ENCODE measurements at regions of chr1 and their contacts with region 1.

Region 1: GRCh38 chr1:16960560-16961296 is 19.7 kb downstream of the MFAP2 start:
- DNase-seq: peak; percentile 89
- ATAC-seq: peak; percentile 94
- H3K4me3 Mint-ChIP-seq: peak overlapping the region; percentile 63
- H3K27ac Mint-ChIP-seq: no peak overlapping the region
- H3K4me1 Mint-ChIP-seq: peaks cover 11% of the 10 kb centered on the region
- H3K27me3 Mint-ChIP-seq: no peaks in the 10 kb centered on the region
- CTCF ChIP-seq: peak; percentile 75

Region 2: GRCh38 chr1:16946646-16947045 is 14.1 kb before region 1 on chr1:
- CTCF ChIA-PET with region 1: interaction called, 31 read pairs
- POLR2A ChIA-PET with region 1: no interaction called
- intact Hi-C with region 1: no loop called
- DNase-seq: no peak
- ATAC-seq: no peak
- H3K4me3 Mint-ChIP-seq: no peak overlapping the region
- H3K27ac Mint-ChIP-seq: no peak overlapping the region
- H3K4me1 Mint-ChIP-seq: no peaks in the 10 kb centered on the region
- H3K27me3 Mint-ChIP-seq: no peaks in the 10 kb centered on the region
- CTCF ChIP-seq: no peak

Region 3: DNA sequence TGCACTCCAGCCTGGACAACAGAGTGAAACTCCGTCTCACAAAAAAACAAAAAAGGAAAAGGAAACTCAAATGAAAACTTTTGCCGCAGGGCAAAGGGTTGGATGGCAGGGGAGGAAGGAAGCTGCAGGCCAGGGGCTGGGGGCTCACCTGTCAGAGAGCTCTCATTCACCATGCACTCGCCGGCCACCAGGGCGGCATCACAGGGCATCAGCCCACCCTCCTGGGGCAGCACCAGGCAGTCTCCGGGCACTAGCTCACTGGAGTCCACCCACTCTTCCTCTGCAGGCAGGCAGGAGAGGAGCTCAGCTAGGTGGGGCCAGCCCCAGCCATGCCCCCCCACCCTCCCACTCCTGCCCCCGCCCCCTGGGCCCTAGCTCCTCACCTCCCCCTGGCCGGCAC is 39.1 kb after region 1 on chr1:
- CTCF ChIA-PET with region 1: interaction called, 10 read pairs
- POLR2A ChIA-PET with region 1: no interaction called
- intact Hi-C with region 1: no loop called
- DNase-seq: no peak
- ATAC-seq: no peak
- H3K4me3 Mint-ChIP-seq: no peak overlapping the region
- H3K27ac Mint-ChIP-seq: no peak overlapping the region
- H3K4me1 Mint-ChIP-seq: no peaks in the 10 kb centered on the region
- H3K27me3 Mint-ChIP-seq: no peaks in the 10 kb centered on the region
- CTCF ChIP-seq: no peak

Region 4: DNA sequence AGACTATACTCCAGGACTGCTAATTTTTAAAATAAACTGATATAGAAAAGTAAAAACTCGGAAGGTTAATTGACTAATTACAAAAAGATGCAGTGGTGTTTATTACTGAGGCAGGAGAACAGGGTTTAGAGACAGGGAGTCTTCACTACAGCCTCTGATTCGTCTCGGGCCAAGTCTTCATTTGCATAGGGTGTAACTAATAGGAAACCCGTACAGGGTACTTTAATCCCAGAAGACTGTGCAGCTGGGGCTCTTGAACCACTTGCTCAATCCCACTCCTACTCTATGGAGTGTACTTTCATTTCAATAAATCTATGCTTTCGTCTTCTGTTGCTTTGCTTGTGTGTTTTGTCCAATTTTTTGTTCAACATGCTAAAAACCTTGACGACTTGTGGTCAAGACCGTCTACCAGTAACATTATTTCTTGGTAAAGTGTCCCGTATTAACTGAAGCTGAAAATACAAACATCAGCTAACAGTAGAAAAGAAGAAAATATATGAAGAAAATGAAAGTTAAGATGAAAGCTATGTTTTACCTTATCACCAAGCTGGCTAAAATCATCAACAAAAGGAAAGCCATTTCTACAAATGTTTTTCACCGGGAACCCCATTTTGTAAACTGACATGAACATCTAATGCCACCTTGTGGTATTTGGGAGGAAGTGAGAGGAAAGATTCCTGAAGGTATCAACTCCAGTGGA is 85.1 kb after region 1 on chr1:
- CTCF ChIA-PET with region 1: interaction called, 12 read pairs
- POLR2A ChIA-PET with region 1: interaction called, 3 read pairs
- intact Hi-C with region 1: no loop called
- DNase-seq: no peak
- ATAC-seq: no peak
- H3K4me3 Mint-ChIP-seq: no peak overlapping the region
- H3K27ac Mint-ChIP-seq: peak overlapping the region; percentile 68
- H3K4me1 Mint-ChIP-seq: peaks cover 19% of the 10 kb centered on the region
- H3K27me3 Mint-ChIP-seq: no peaks in the 10 kb centered on the region
- CTCF ChIP-seq: peak; percentile 73

Region 5: DNA sequence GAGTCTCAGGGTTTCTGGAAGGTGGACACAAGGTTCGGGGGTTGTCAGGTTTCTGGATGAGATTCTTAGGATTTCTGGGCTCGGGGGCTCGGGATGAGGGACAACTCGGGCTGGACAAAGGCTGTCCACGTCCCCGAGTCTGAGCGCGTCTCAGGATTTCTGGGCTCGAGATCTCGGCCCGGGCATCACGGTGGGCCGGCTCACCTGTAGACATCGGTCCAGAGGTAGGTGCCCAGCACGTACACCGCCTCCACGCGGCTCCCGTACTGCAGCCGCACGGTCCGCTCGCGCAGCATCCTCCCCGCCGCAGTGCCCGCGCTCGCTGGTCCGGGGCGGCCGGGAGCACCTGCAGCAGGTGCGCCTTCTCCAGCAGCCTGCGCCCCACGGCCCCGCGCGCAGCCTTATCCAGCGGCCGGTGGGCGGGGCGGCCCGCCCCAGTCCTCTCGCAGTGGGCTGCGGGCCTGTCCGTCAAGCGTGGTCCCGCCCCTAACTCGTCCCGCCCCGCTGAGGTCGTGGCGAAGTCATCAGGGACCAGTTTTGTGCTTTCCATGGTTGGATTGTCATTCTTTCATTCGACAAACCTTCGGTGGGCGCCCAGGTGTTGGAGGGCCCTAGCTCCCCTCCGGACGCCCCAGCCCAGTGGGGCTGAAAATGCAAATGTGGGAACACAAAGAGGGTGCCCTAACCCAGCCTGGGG is 158.5 kb after region 1 on chr1 and contains the start of gene PADI2:
- CTCF ChIA-PET with region 1: no interaction called
- POLR2A ChIA-PET with region 1: no interaction called
- intact Hi-C with region 1: no loop called
- DNase-seq: peak; percentile 68
- ATAC-seq: peak; percentile 97
- H3K4me3 Mint-ChIP-seq: peak within 1 kb of the TSS; percentile 8
- H3K27ac Mint-ChIP-seq: no peak within 1 kb of the TSS
- H3K4me1 Mint-ChIP-seq: peaks cover 11% of the 10 kb centered on the region
- H3K27me3 Mint-ChIP-seq: peaks cover 42% of the 10 kb centered on the region
- CTCF ChIP-seq: no peak
- total RNA-seq, gene PADI2: not detected

Measured in activated CD8-positive, alpha-beta T cell treated with anti-CD3 and anti-CD28 coated beads for 36 hours (primary cell).